Naive thymus-derived CD4-positive, alpha-beta T cell (primary cell): ENCODE measurements at regions of chr2 and their contacts with region 1.

Region 1: GRCh38 chr2:32627814-32628579 is at the start of gene TTC27:
- DNase-seq: peak; percentile 93 to 96 (median 95)
- ATAC-seq: peak; percentile 100
- H3K4me3 ChIP-seq: peak within 1 kb of the TSS; percentile 89
- H3K4me3 Mint-ChIP-seq: peak within 1 kb of the TSS; percentile 85 to 97 (median 95)
- H3K27ac ChIP-seq: peak within 1 kb of the TSS; percentile 82
- H3K27ac Mint-ChIP-seq: peak within 1 kb of the TSS; percentile 82 to 98 (median 89)
- H3K4me1 ChIP-seq: no peaks in the 10 kb centered on the region
- H3K4me1 Mint-ChIP-seq: peaks cover 10 to 44% (median 31%) of the 10 kb centered on the region in 7 donors
- H3K27me3 ChIP-seq: no peaks in the 10 kb centered on the region
- H3K27me3 Mint-ChIP-seq: no peaks in the 10 kb centered on the region
- total RNA-seq, gene TTC27: 18.5 to 27.5 (median 23.3) TPM

Region 2: GRCh38 chr2:32168513-32168912 is 459.5 kb before region 1 on chr2:
- CTCF ChIA-PET with region 1: no interaction called
- POLR2A ChIA-PET with region 1: no interaction called
- intact Hi-C with region 1: loop called (anchors 1 to 2 kb)
- DNase-seq: no peak
- ATAC-seq: no peak
- H3K4me3 ChIP-seq: no peak overlapping the region
- H3K4me3 Mint-ChIP-seq: no peak overlapping the region
- H3K27ac ChIP-seq: no peak overlapping the region
- H3K27ac Mint-ChIP-seq: peak overlapping the region in 4 of 9 donors; percentile 2 to 25 (median 10)
- H3K4me1 ChIP-seq: no peaks in the 10 kb centered on the region
- H3K4me1 Mint-ChIP-seq: peaks cover 17 to 61% (median 49%) of the 10 kb centered on the region in 7 donors
- H3K27me3 ChIP-seq: no peaks in the 10 kb centered on the region
- H3K27me3 Mint-ChIP-seq: no peaks in the 10 kb centered on the region

Region 3: GRCh38 chr2:32356735-32357644 is 271.0 kb before region 1 on chr2 and contains the start of gene BIRC6:
- CTCF ChIA-PET with region 1: no interaction called
- POLR2A ChIA-PET with region 1: no interaction called
- intact Hi-C with region 1: loop called (anchors 1 to 2 kb)
- DNase-seq: peak; percentile 74 to 96 (median 82)
- ATAC-seq: peak; percentile 92
- H3K4me3 ChIP-seq: peak within 1 kb of the TSS; percentile 77
- H3K4me3 Mint-ChIP-seq: peak within 1 kb of the TSS; percentile 87 to 98 (median 92)
- H3K27ac ChIP-seq: peak within 1 kb of the TSS; percentile 92
- H3K27ac Mint-ChIP-seq: peak within 1 kb of the TSS; percentile 60 to 98 (median 92)
- H3K4me1 ChIP-seq: peaks cover 6 to 21% of the 10 kb centered on the region in 2 donors
- H3K4me1 Mint-ChIP-seq: peaks cover 29 to 44% (median 36%) of the 10 kb centered on the region in 7 donors
- H3K27me3 ChIP-seq: no peaks in the 10 kb centered on the region
- H3K27me3 Mint-ChIP-seq: no peaks in the 10 kb centered on the region
- total RNA-seq, gene BIRC6: 130 to 159 (median 145) TPM

Region 4: GRCh38 chr2:32591669-32592463 is 36.1 kb before region 1 on chr2:
- CTCF ChIA-PET with region 1: no interaction called
- POLR2A ChIA-PET with region 1: no interaction called
- intact Hi-C with region 1: loop called in 1 of 2 experiments (anchors 2 kb)
- DNase-seq: peak in 6 of 9 donors; percentile 5 to 42 (median 25)
- ATAC-seq: peak; percentile 85
- H3K4me3 ChIP-seq: no peak overlapping the region
- H3K4me3 Mint-ChIP-seq: peak overlapping the region in 5 of 10 donors; percentile 8 to 58 (median 28)
- H3K27ac ChIP-seq: no peak overlapping the region
- H3K27ac Mint-ChIP-seq: peak overlapping the region; percentile 47 to 87 (median 72)
- H3K4me1 ChIP-seq: peaks cover 0 to 5% of the 10 kb centered on the region in 2 donors
- H3K4me1 Mint-ChIP-seq: peaks cover 6 to 45% (median 37%) of the 10 kb centered on the region in 7 donors
- H3K27me3 ChIP-seq: no peaks in the 10 kb centered on the region
- H3K27me3 Mint-ChIP-seq: no peaks in the 10 kb centered on the region

Region 5: DNA sequence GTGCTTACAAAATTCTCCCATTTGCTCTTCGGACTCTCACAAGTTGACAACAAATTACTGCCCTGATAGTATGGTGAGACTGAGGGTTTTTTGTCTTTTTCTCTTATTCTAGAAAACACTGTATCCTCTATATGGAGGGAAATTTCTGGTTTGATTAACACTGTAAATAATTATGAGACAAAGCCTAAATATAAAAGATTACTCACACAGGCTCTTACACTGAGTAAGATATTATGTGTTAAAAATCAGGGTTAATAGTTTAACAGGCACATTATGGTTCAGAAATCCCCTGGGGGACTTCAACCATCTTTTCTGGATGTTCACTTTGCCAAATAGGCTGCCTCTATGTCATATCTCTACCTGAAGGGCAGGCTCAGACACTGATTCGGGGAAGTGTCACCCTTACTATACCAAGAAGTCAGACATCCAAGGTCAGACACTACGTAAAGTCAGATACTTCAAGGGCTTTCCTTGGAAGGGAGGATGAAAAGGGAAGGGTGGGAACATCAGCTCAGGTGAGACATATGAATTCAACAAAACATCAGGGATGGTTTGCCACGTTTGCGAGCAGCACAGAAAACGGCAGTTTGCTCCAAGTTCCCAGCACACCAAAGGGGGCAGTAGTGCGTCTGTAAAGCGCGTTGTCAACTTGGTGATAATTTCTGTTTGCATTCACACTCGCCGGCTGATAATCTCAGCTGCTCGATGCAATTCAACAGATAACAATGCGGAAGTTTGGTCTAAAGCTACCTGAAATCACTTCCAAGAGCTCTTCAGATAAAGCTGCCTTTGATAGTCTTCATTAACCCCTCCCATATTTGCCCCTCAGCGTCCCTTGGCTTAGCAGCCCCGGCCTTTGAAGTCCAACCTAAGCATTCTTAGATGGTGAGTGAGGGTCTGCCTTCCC is 847.5 kb after region 1 on chr2:
- CTCF ChIA-PET with region 1: no interaction called
- POLR2A ChIA-PET with region 1: no interaction called
- intact Hi-C with region 1: loop called (anchors 1 to 2 kb)
- DNase-seq: peak; percentile 61 to 89 (median 83)
- ATAC-seq: peak; percentile 86
- H3K4me3 ChIP-seq: peak overlapping the region; percentile 81
- H3K4me3 Mint-ChIP-seq: peak overlapping the region; percentile 88 to 99 (median 95)
- H3K27ac ChIP-seq: peak overlapping the region; percentile 91
- H3K27ac Mint-ChIP-seq: peak overlapping the region; percentile 95 to 100 (median 98)
- H3K4me1 ChIP-seq: peaks cover 9 to 11% of the 10 kb centered on the region in 2 donors
- H3K4me1 Mint-ChIP-seq: peaks cover 14 to 39% (median 32%) of the 10 kb centered on the region in 7 donors
- H3K27me3 ChIP-seq: no peaks in the 10 kb centered on the region
- H3K27me3 Mint-ChIP-seq: peaks cover 0 to 4% (median 0%) of the 10 kb centered on the region in 5 donors